Left colon (tissue), 2 donors: ENCODE measurements at regions of chr11 and their contacts with region 1.

Region 1: DNA sequence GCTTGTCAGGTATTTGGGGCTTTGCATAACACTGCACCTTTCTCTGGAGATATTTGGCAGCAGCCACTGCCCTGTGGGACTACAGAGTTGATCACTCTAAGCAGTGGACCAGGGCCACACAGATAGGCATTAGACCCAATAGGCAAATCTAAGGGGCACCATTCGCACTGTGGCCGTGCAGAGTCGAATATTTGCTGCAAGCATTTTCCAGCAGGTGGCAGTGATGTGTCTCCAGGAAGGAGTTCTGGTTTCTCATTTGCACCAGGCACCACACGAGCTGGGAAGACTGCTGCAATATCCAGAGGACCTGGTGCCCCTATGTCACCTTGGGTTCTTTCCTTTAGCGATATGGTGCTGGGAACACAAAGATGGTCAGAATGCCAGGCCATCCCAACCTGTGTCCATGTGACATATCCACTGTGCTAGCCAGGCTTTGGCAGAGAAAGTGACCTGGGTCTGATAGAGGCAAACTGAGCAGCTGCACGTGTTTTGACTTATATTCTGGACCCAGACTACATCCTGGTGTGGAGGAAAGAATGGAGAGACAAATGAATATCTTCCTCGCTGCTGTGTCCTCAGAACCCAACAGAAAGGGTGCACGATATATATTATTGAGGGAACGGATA is 318.7 kb downstream of the BUD13 start:
- DNase-seq: peak; percentile 48 to 66
- ATAC-seq: peak; percentile 86

Region 2: DNA sequence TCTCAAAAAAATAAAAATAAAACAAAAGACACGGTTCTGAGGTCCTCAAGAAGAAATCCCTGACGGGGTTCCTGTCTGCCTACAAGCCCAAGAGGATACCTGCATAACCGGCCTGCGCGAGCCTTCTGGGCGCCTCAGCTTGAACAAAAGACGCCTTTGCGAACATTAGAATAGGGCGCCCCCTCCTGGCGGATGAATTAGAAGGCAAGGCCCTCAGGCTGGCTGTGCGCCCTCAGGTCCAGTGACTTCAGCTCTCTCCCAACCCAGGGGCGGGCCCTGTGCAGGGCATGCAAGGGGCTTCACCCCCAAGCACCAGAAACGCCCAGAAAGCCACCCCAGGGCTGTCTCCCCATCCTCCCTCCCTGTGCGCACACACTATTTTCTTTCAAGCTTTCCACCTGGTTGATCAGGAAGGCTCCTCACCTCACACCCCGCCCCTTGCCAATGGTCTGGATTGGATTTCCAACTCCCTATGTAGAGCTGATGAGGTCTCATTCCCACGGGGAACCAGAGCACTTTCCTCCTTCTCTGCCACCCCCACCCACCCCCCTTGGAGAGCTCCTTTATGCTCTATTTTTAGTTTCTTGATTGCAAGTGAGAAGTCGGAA is 45.4 kb after region 1 on chr11:
- intact Hi-C with region 1: loop called in 1 of 2 experiments (anchors 2 kb)
- DNase-seq: peak; percentile 71 to 93
- ATAC-seq: peak; percentile 90

Region 3: GRCh38 chr11:116533186-116533825 is 79.2 kb after region 1 on chr11:
- intact Hi-C with region 1: no loop called
- DNase-seq: no peak
- ATAC-seq: no peak

Region 4: GRCh38 chr11:116641561-116642045 is 187.5 kb after region 1 on chr11:
- intact Hi-C with region 1: loop called in 1 of 2 experiments (anchors 10 kb)
- DNase-seq: peak in 1 of 2 donors; percentile 59
- ATAC-seq: peak; percentile 76